Right ventricle myocardium inferior (tissue), 1 donor: ENCODE measurements at regions of chr11 and their contacts with region 1.

Region 1: GRCh38 chr11:117876341-117877119 is at the start of gene FXYD6:
- DNase-seq: peak; percentile 83
- ATAC-seq: peak; percentile 75
- total RNA-seq, gene FXYD6: 41.2 TPM

Region 2: GRCh38 chr11:117621226-117621625 is 255.3 kb before region 1 on chr11:
- intact Hi-C with region 1: no loop called
- DNase-seq: no peak
- ATAC-seq: no peak

Region 3: DNA sequence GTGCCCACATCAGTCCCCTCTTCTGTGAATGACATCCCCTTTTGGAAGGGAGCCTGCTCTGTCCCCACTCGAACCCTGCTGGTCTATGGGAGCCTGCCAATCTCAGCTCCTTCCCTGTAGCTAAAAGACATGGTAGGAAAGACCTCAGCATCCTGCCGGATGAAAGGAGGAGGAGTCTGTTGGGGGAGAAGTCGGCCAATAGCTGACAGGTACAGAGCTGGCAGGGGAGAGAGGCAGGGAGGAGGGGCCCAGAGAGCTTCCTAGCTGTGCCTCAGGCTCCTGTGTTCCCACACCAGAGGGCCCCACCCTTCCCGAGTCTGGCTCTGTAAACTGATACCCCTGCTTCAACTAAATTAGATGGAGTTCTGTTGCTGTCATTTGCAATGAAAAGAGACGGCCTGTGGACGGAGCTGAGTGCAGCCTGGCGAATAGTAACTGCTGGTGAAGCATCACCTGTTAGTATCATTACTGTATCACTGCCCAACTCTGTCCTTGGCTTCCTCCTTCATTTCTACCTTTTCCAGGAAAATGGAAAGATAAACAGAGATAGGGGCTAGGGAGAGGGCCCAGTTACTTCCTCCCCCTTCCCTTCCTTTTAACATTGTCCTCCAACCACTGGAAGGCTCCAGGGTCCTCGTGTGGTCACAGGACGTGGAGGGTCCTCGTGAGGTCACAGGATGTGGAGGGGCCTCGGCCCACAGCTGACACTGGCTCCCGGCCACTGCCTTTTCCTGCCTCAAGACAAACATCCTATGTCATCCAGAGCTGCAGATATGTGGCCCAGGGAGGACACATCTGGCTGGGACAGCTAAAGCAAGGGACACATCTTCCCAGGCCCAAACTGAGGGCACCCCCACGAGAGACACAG is 15.1 kb before region 1 on chr11:
- intact Hi-C with region 1: loop called (anchors 1 kb)
- DNase-seq: no peak
- ATAC-seq: peak; percentile 70

Region 4: GRCh38 chr11:117900121-117900648 is 23.7 kb after region 1 on chr11:
- intact Hi-C with region 1: no loop called
- DNase-seq: no peak
- ATAC-seq: peak; percentile 38